B cell (primary cell): ENCODE measurements at regions of chr19 and their contacts with region 1.

Region 1: GRCh38 chr19:16185123-16185767 is at the start of gene FAM32A:
- DNase-seq: peak; percentile 99
- ATAC-seq: peak; percentile 88
- H3K4me3 ChIP-seq: peak within 1 kb of the TSS; percentile 65 to 99 (median 71)
- H3K4me3 Mint-ChIP-seq: peak within 1 kb of the TSS; percentile 97
- H3K27ac ChIP-seq: peak within 1 kb of the TSS; percentile 60 to 83
- H3K27ac Mint-ChIP-seq: peak within 1 kb of the TSS; percentile 96
- H3K4me1 ChIP-seq: peaks cover 14 to 37% of the 10 kb centered on the region in 2 donors
- H3K4me1 Mint-ChIP-seq: peaks cover 33% of the 10 kb centered on the region
- H3K27me3 ChIP-seq: no peaks in the 10 kb centered on the region
- H3K27me3 Mint-ChIP-seq: no peaks in the 10 kb centered on the region
- CTCF ChIP-seq: no peak
- total RNA-seq, gene FAM32A: 53.4 TPM in 2 replicates

Region 2: DNA sequence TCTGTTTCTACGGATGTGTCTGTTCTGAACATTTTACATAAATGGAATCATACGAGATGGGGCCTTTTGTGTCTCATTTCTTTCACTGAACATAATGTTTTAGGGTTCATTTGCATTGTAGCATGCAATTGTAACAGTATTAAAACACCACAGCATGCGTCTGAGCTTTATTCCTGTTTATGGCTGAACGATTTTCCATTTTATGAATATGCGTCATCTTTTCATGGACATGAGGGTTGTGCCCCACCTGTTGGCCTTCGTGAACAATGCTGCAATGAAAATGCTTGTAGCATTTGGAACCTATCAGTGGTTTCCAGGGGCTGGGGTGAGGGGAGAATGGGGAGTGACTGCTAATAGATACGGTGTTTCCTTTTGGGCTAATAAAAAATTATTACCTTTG is 374.9 kb before region 1 on chr19:
- CTCF ChIA-PET with region 1: no interaction called
- POLR2A ChIA-PET with region 1: no interaction called
- intact Hi-C with region 1: loop called (anchors 5 kb)
- DNase-seq: no peak
- ATAC-seq: no peak
- H3K4me3 ChIP-seq: no peak overlapping the region
- H3K4me3 Mint-ChIP-seq: no peak overlapping the region
- H3K27ac ChIP-seq: no peak overlapping the region
- H3K27ac Mint-ChIP-seq: no peak overlapping the region
- H3K4me1 ChIP-seq: no peaks in the 10 kb centered on the region
- H3K4me1 Mint-ChIP-seq: no peaks in the 10 kb centered on the region
- H3K27me3 ChIP-seq: peaks cover 0 to 24% (median 7%) of the 10 kb centered on the region in 4 experiments
- H3K27me3 Mint-ChIP-seq: peaks cover 48% of the 10 kb centered on the region
- CTCF ChIP-seq: no peak

Region 3: GRCh38 chr19:15934332-15935174 is 250.7 kb before region 1 on chr19 and contains the start of gene CYP4F11:
- CTCF ChIA-PET with region 1: no interaction called
- POLR2A ChIA-PET with region 1: no interaction called
- intact Hi-C with region 1: no loop called
- DNase-seq: no peak
- ATAC-seq: no peak
- H3K4me3 ChIP-seq: no peak within 1 kb of the TSS
- H3K4me3 Mint-ChIP-seq: no peak within 1 kb of the TSS
- H3K27ac ChIP-seq: no peak within 1 kb of the TSS
- H3K27ac Mint-ChIP-seq: no peak within 1 kb of the TSS
- H3K4me1 ChIP-seq: no peaks in the 10 kb centered on the region
- H3K4me1 Mint-ChIP-seq: peaks cover 4% of the 10 kb centered on the region
- H3K27me3 ChIP-seq: peaks cover 0 to 14% (median 7%) of the 10 kb centered on the region in 4 experiments
- H3K27me3 Mint-ChIP-seq: peaks cover 16% of the 10 kb centered on the region
- CTCF ChIP-seq: no peak
- total RNA-seq, gene CYP4F11: not detected in 2 replicates

Region 4: DNA sequence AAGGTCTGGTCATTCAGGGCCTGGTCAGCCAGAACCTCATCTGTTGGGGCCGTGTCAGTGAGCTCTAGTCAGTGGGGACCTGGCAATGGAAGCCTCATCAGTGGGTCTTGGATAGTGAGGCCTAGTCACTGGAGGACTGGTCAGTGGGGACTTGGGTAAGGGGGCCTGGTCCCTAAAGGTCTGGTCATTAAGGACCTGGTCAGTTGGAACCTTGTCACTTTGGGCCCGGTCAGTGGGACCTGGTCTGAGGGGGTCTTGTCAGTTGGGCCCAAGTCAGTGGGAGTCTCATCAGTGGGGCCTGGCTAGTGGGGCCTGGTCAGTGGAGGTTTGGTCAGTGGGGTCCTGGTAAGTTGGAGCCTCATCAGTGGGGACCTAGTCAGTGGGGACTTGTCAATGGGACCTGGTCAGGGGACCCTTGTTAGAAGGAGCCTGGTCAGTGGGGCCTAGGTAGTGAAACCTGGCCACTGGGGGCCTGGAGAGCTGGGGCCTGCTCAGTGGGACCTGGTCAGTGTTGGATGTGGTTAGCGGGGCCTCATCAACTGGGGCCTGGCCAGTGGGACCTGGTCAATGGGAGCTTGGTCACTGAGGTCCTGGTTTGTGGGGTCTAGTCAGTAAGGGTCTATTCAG is 152.6 kb before region 1 on chr19:
- CTCF ChIA-PET with region 1: no interaction called
- POLR2A ChIA-PET with region 1: no interaction called
- intact Hi-C with region 1: no loop called
- DNase-seq: peak; percentile 5
- ATAC-seq: no peak
- H3K4me3 ChIP-seq: no peak overlapping the region
- H3K4me3 Mint-ChIP-seq: no peak overlapping the region
- H3K27ac ChIP-seq: no peak overlapping the region
- H3K27ac Mint-ChIP-seq: no peak overlapping the region
- H3K4me1 ChIP-seq: no peaks in the 10 kb centered on the region
- H3K4me1 Mint-ChIP-seq: no peaks in the 10 kb centered on the region
- H3K27me3 ChIP-seq: peaks cover 0 to 4% (median 0%) of the 10 kb centered on the region in 4 experiments
- H3K27me3 Mint-ChIP-seq: no peaks in the 10 kb centered on the region
- CTCF ChIP-seq: no peak

Region 5: DNA sequence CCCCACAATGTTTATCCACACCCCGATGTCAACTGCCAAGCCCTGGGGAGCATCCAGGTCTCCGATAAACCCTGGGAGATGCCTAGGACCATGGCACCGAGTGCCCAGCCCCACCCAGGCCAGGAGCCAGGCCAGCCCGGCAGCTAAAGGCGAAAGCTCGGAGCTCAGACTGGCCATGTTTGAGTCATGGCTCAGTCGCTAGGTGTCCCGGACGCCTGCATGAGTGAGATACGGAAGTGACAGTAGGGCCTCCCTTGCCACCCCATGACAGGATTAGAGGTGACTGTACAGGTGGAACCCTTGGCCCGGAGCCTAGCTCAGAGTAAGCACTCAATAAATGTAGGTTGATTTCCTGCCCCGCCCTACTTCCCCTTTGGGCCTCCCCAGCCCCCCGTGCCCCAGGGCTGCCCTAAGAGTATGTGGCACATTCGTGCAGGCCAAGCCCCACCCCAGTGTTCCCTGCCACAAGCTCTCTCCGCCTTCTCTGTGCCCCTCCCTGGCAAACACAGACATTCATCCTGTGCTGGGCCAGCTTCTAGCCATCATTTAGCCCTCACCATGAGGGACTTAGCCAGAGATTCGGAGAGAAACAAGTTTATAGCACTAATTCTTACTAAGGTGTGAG is 114.8 kb before region 1 on chr19:
- CTCF ChIA-PET with region 1: interaction called, 45 read pairs
- POLR2A ChIA-PET with region 1: interaction called, 9 read pairs
- intact Hi-C with region 1: loop called (anchors 1 kb)
- DNase-seq: peak; percentile 95
- ATAC-seq: peak; percentile 91
- H3K4me3 ChIP-seq: peak overlapping the region in 4 of 5 experiments; percentile 30 to 56 (median 43)
- H3K4me3 Mint-ChIP-seq: no peak overlapping the region
- H3K27ac ChIP-seq: peak overlapping the region; percentile 96 to 98
- H3K27ac Mint-ChIP-seq: no peak overlapping the region
- H3K4me1 ChIP-seq: peaks cover 23 to 42% of the 10 kb centered on the region in 2 donors
- H3K4me1 Mint-ChIP-seq: peaks cover 26% of the 10 kb centered on the region
- H3K27me3 ChIP-seq: no peaks in the 10 kb centered on the region
- H3K27me3 Mint-ChIP-seq: no peaks in the 10 kb centered on the region
- CTCF ChIP-seq: peak; percentile 37

Region 6: GRCh38 chr19:16111160-16111908 is 73.9 kb before region 1 on chr19 and contains the start of gene RAB8A:
- CTCF ChIA-PET with region 1: interaction called, 14 read pairs
- POLR2A ChIA-PET with region 1: interaction called, 8 read pairs
- intact Hi-C with region 1: loop called (anchors 1 kb)
- DNase-seq: peak; percentile 100
- ATAC-seq: peak; percentile 88
- H3K4me3 ChIP-seq: peak within 1 kb of the TSS; percentile 50 to 99 (median 96)
- H3K4me3 Mint-ChIP-seq: peak within 1 kb of the TSS; percentile 96
- H3K27ac ChIP-seq: peak within 1 kb of the TSS; percentile 74 to 97
- H3K27ac Mint-ChIP-seq: peak within 1 kb of the TSS; percentile 95
- H3K4me1 ChIP-seq: peaks cover 29 to 53% of the 10 kb centered on the region in 2 donors
- H3K4me1 Mint-ChIP-seq: peaks cover 42% of the 10 kb centered on the region
- H3K27me3 ChIP-seq: no peaks in the 10 kb centered on the region
- H3K27me3 Mint-ChIP-seq: no peaks in the 10 kb centered on the region
- CTCF ChIP-seq: peak; percentile 91
- total RNA-seq, gene RAB8A: 115 and 117 TPM in 2 replicates

Region 7: DNA sequence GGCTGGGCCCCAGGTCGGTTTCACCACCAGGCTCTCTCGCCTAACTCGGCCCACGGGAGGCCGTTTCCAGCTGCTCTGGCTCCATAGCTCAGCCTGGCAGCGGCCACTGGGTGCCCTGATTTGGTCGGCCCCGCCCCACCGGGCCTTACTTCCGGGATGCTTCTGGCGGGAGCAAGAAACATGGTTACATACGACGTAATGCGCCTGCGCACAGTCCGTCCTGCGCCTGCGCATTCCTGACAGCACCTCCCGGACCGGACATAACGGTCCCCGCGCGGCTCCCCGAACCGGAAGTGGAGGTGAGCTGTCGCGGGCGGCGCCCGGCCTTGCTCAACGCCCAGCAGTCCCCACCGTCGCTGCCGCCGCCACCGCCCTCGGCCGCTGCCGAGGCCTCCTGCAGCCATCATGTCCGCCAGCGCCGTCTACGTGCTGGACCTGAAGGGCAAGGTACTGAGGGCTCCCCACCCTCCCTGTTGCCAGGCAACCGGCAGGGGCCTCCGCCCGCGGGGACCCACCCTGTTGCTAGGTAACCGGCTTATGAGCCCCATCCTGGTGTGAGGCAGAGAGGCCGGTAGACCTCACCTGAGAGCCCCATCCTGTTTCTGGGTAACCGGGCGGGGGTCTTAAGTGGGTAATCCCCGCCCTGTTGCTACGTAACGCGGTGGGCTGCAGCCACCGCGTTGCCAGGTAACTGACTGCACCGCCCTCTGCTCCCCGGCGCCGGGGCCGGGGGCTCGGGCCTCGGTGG is 12.6 kb after region 1 on chr19 and contains the start of gene AP1M1:
- CTCF ChIA-PET with region 1: interaction called, 17 read pairs
- POLR2A ChIA-PET with region 1: interaction called, 5 read pairs
- intact Hi-C with region 1: loop called (anchors 1 kb)
- DNase-seq: peak; percentile 99
- ATAC-seq: peak; percentile 93
- H3K4me3 ChIP-seq: peak within 1 kb of the TSS; percentile 67 to 92 (median 87)
- H3K4me3 Mint-ChIP-seq: peak within 1 kb of the TSS; percentile 93
- H3K27ac ChIP-seq: peak within 1 kb of the TSS; percentile 66 to 92
- H3K27ac Mint-ChIP-seq: peak within 1 kb of the TSS; percentile 98
- H3K4me1 ChIP-seq: peaks cover 18 to 28% of the 10 kb centered on the region in 2 donors
- H3K4me1 Mint-ChIP-seq: peaks cover 35% of the 10 kb centered on the region
- H3K27me3 ChIP-seq: no peaks in the 10 kb centered on the region
- H3K27me3 Mint-ChIP-seq: no peaks in the 10 kb centered on the region
- CTCF ChIP-seq: no peak
- total RNA-seq, gene AP1M1: 90.4 and 102 TPM in 2 replicates